ENCODE measurements at regions of chr13 and their contacts with region 1.

Region 1: DNA sequence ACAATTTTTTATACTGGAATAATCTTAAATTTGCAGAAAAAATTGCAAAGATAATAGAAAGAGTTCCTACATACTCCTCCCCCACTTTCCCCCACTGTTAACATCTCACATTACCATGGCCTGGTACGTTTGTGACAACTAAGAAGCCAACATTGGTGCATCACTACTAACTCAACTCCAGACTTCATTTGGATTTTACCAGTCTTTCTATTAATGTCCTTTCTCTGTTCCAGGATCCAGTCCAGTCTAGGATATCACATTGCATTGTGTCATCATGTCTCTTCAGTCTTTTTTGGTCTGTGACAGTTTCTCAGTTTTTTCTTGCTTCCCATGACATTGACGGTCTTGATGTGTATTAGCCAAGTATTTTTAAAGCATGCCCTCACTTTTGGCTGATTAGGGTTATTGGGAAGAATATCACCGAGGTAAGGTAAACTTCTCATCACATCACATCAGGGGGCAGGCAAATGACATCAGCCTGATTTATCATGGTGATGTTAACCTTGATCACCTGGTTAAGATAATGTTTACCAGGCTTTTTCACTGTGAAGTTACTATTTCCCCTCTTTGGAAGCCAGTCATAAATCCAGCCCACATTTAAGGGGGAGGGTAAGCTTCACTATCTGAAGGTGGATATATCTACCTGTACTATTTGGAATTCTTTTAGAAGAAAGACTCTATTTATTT is 322.1 kb downstream of the ENOX1 start:
- DNase-seq: no peak
- H3K4me3 ChIP-seq: no peak overlapping the region
- CTCF ChIP-seq: no peak
- POLR2A ChIP-seq: no peak

Region 2: DNA sequence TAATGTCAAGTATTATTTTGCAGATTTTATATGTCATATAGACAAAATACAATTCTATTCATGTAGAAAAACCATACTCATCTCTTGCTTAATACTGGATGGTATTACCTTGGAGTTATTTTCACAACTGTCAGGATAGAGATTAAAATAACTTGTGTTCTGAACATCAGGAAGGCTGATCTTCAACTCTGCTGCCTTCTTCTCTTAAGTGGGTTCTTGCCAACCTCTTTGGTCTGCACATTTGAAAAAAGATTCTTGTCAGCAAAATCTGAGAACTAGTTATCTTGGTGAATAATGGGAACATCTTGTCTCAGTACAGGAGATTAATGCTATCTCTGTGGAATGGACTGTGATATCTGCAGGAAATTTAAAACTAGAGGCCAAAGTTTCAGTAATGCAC is 778.6 kb before region 1 on chr13:
- intact Hi-C with region 1: loop called (anchors 5 kb)
- DNase-seq: no peak
- H3K4me3 ChIP-seq: no peak overlapping the region
- CTCF ChIP-seq: no peak
- POLR2A ChIP-seq: no peak